Panc1 (cell line): ENCODE measurements at regions of chr12 and their contacts with region 1.

Region 1: DNA sequence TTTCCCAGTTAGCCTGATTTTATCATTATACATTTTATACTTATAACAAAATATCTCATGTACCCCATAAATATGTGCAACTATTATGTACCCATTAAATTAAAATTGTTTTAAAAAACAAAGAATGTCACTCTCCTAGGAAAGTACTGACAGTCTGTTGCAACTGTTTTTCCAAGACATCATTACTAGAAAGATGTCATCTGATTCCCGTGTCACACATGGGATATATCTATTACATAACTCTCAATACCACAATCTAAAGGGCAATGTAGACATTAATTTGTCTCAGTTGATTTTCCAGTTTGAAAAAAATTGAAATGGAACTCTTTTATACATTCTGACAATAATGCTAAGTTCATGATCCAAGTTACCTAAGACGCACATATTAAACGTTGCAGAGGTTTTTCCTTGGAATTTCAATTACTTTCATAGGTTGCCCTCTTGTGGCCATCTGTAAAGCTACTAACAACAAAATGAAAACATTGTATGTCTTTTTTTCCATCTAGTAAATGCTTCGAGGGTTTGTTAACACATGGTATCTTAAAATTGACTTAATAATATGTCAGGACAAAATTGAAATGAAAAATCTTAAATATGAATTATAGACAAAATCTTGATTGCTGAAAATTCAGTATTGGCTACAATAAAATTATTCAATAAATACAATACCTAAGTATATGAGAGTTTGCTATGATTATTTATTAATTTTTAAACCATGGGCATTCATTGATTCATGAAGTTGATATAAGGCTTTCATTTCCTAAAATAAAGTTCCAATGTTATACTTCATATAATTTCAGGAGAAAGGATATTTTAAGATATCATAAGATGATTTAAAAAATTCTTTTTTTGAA is 131.6 kb downstream of the PPFIA2 start:
- DNase-seq: peak; percentile 24
- ATAC-seq: no peak
- H3K4me3 ChIP-seq: no peak overlapping the region
- H3K27ac ChIP-seq: no peak overlapping the region
- H3K4me1 ChIP-seq: no peaks in the 10 kb centered on the region
- H3K27me3 ChIP-seq: no peaks in the 10 kb centered on the region
- CTCF ChIP-seq: peak; percentile 65; the same call in 1 of the 2 replicates

Region 2: DNA sequence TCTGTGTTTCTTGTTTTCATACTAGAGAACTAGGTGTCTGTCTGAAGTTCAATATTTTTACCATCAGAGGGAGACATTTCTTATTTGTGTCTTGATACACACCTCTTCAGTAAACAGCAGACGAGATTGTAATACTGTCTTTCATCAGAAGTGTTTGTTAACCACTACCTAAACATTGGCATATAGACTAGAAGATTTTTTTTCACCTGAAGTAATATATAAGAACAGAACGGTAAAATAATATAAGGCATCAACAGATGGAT is 359.0 kb before region 1 on chr12:
- CTCF ChIA-PET with region 1: no interaction called
- POLR2A ChIA-PET with region 1: no interaction called
- in situ Hi-C with region 1: no loop called
- intact Hi-C with region 1: loop called (anchors 1 kb)
- DNase-seq: peak; percentile 32
- ATAC-seq: peak; percentile 94
- H3K4me3 ChIP-seq: no peak overlapping the region
- H3K27ac ChIP-seq: no peak overlapping the region
- H3K4me1 ChIP-seq: no peaks in the 10 kb centered on the region
- H3K27me3 ChIP-seq: no peaks in the 10 kb centered on the region
- CTCF ChIP-seq: peak; percentile 65; the same call in 1 of the 2 replicates

Region 3: DNA sequence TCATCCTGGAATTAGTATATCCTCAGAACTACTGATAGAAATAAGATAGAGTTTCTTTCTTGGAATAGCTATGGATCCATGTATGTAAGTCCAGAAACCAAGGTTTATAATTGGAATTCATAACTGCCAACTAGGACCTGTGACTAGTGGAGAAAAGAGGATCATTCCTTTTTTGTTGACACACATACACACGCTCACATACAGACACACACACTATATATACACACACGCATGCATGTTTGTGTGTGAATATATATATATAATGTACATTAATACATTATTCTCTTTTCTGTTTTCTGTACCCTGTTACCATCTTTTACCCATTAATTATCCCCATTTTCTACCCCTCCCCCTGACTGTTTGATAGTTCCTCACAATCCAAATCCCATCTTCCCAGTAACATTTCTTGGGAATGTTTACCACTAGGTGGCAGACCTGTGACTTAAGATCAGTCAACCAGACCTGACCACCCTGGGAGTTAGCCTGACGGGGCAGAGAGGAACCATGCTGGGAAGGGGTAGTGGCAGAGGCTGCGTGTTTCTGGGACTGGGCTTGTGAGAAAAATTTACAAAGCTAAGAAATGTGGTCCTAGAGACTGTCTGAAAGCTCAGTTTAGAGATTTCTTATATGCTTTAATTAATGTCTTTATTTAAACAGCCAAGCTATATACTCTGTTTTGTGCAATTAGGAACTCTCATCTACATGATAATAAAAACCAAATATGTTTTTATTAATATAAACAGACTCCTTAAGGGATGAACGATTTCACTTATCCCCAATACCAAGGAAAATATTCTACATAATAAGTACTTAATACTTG is 176.4 kb before region 1 on chr12:
- CTCF ChIA-PET with region 1: interaction called, 3 read pairs
- POLR2A ChIA-PET with region 1: no interaction called
- in situ Hi-C with region 1: no loop called
- intact Hi-C with region 1: loop called (anchors 1 kb)
- DNase-seq: peak; percentile 12
- ATAC-seq: peak; percentile 88
- H3K4me3 ChIP-seq: no peak overlapping the region
- H3K27ac ChIP-seq: no peak overlapping the region
- H3K4me1 ChIP-seq: no peaks in the 10 kb centered on the region
- H3K27me3 ChIP-seq: no peaks in the 10 kb centered on the region
- CTCF ChIP-seq: peak; percentile 73

Region 4: DNA sequence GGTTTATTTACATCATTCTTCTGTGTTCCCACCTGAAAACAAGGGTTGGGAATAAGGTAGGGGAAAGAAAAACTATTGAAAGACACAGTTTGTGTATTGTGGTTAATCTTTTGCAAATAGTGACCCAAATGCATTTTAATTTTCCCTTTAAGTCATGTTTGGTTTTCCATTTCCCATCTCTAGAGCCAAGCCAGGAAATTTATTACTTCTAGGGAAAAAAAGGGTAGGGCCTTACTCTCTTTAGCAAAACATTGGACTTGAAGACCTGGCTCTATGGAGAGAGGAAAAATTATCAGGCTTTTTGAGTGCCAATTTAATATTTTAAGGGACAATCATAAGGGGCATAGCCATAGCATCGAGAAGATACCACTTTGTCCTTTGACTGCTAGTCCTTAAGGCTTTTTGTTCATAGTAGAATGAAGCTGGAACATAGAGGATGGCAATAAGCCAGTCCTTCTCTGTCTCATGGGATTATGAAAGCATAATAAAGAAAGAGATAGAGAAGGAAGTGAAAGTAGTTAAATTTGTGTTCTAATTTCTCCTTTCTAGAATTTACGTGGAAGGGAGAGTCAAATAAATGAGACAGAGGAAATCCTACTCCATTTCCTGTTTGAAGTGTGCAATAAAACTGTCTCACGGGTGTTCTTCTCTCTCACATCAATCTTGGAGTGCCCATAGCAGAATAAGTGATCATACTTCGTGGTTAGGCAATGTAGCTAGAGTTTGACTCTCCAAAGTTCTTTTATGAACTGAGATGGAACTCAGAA is 182.4 kb after region 1 on chr12:
- CTCF ChIA-PET with region 1: no interaction called
- POLR2A ChIA-PET with region 1: no interaction called
- in situ Hi-C with region 1: no loop called
- intact Hi-C with region 1: no loop called
- DNase-seq: no peak
- ATAC-seq: no peak
- H3K4me3 ChIP-seq: no peak overlapping the region
- H3K27ac ChIP-seq: no peak overlapping the region
- H3K4me1 ChIP-seq: no peaks in the 10 kb centered on the region
- H3K27me3 ChIP-seq: no peaks in the 10 kb centered on the region
- CTCF ChIP-seq: no peak